B cell (primary cell): ENCODE measurements at regions of chr1 and their contacts with region 1.

Region 1: DNA sequence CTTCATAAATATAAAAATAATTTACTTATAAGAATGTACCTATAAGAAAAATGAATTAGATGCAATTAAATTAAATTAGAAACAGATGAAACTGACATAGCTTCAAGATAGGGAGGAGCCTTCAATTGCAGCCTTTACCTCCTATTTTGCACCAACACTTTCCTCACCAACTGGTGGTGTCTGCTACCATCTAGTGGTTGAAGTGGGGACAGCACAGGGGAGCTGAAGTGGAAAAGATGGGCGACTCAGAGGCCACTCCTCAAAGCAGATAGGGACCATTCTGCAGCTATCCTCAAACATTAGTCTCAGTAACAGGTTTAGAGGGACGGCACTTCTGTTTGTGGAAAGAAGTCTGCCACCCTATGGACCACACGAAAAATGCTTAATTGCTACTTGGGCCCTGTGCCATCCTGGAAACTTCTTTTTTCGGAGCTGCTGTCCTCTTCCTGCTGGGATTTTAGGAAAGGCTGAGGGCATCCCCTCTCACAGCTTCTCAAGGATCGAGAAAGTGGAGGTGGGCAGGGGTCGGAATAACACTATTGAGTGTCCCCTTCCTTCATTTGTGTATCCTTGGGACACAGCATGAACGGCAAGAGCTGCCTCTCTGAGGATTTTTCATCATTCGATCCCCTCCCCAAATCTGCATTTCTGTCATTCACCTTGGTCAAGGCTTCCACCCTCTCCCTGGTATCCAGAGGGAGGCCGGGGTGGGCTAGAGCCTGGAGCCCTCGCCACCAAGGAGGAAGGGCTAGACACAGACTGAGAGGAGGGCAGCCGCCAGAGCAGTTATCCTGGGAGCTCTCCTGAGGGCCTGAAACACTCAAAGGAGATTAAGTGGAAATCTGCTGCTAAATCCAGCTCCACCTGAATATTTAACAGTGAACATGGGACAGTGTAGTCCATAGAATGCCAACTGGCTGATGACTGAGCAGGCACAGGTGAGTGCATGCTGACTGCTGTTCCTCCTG is 9.6 kb downstream of the PROK1 start:
- DNase-seq: peak; percentile 87
- ATAC-seq: peak; percentile 99
- H3K4me3 ChIP-seq: no peak overlapping the region
- H3K4me3 Mint-ChIP-seq: no peak overlapping the region
- H3K27ac ChIP-seq: no peak overlapping the region
- H3K27ac Mint-ChIP-seq: no peak overlapping the region
- H3K4me1 ChIP-seq: peaks cover 0 to 2% of the 10 kb centered on the region in 2 donors
- H3K4me1 Mint-ChIP-seq: no peaks in the 10 kb centered on the region
- H3K27me3 ChIP-seq: peaks cover 0 to 3% (median 0%) of the 10 kb centered on the region in 4 experiments
- H3K27me3 Mint-ChIP-seq: peaks cover 4% of the 10 kb centered on the region
- CTCF ChIP-seq: peak; percentile 97

Region 2: GRCh38 chr1:110087812-110088738 is 372.5 kb before region 1 on chr1:
- CTCF ChIA-PET with region 1: interaction called, 13 read pairs
- POLR2A ChIA-PET with region 1: no interaction called
- intact Hi-C with region 1: no loop called
- DNase-seq: peak; percentile 72
- ATAC-seq: peak; percentile 59
- H3K4me3 ChIP-seq: no peak overlapping the region
- H3K4me3 Mint-ChIP-seq: no peak overlapping the region
- H3K27ac ChIP-seq: no peak overlapping the region
- H3K27ac Mint-ChIP-seq: no peak overlapping the region
- H3K4me1 ChIP-seq: peaks cover 10 to 18% of the 10 kb centered on the region in 2 donors
- H3K4me1 Mint-ChIP-seq: peaks cover 11% of the 10 kb centered on the region
- H3K27me3 ChIP-seq: peaks cover 0 to 47% (median 19%) of the 10 kb centered on the region in 4 experiments
- H3K27me3 Mint-ChIP-seq: peaks cover 48% of the 10 kb centered on the region
- CTCF ChIP-seq: peak; percentile 79

Region 3: DNA sequence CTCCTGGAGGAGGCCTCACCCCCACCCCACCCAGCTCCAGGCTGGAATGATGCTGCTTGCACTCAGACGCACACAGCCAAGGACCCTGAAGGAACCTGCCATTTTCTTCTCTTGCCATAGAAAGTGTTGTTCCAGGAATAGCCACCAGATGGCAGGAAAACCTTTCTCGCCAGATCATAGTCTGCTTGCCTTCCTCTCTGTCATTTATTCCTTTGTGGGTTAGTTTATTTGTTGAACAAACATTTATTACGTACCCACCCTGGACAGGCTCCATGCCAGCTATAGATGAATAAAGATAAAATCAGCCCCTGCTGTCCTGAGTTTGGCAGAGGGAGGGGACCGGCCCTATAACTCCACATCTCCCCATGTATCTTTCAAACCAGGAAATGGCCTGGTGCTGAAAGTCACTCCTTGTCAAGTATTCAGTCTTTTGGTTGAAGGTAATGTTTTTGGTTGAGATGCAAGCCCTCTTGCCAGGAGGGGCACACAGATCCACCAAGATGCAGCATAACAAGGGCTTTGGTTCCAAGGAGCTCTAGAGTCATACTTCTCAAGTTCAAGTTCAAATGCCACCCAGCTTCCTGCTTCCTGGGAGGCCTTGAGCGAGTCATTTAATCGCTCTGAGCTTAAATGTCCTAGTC is 257.4 kb before region 1 on chr1:
- CTCF ChIA-PET with region 1: interaction called, 837 read pairs
- POLR2A ChIA-PET with region 1: interaction called, 7 read pairs
- intact Hi-C with region 1: loop called (anchors 1 kb)
- DNase-seq: peak; percentile 84
- ATAC-seq: peak; percentile 71
- H3K4me3 ChIP-seq: no peak overlapping the region
- H3K4me3 Mint-ChIP-seq: no peak overlapping the region
- H3K27ac ChIP-seq: no peak overlapping the region
- H3K27ac Mint-ChIP-seq: no peak overlapping the region
- H3K4me1 ChIP-seq: peaks cover 3 to 7% of the 10 kb centered on the region in 2 donors
- H3K4me1 Mint-ChIP-seq: peaks cover 11% of the 10 kb centered on the region
- H3K27me3 ChIP-seq: no peaks in the 10 kb centered on the region
- H3K27me3 Mint-ChIP-seq: no peaks in the 10 kb centered on the region
- CTCF ChIP-seq: peak; percentile 91

Region 4: DNA sequence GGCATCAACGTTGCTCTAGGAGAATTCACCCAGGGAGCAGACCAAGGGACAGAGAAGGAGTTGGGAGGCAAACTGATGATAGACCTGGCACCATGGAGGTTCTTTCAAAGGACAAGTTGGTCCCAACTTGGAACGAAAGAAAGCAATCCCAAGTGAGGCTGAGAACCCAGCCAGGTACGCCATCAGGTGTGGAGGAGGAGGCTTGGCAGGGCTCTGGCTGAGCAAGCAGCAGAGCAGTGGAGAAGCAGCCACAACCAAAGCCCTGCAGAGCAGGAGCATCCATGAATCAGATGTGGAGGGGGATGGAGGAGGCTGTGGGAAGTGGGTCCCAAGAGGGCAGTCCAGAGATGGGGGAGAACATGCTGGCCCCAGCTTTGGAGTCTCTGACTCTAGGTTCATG is 157.7 kb before region 1 on chr1:
- CTCF ChIA-PET with region 1: interaction called, 10 read pairs
- POLR2A ChIA-PET with region 1: no interaction called
- intact Hi-C with region 1: no loop called
- DNase-seq: no peak
- ATAC-seq: no peak
- H3K4me3 ChIP-seq: no peak overlapping the region
- H3K4me3 Mint-ChIP-seq: no peak overlapping the region
- H3K27ac ChIP-seq: no peak overlapping the region
- H3K27ac Mint-ChIP-seq: no peak overlapping the region
- H3K4me1 ChIP-seq: no peaks in the 10 kb centered on the region
- H3K4me1 Mint-ChIP-seq: no peaks in the 10 kb centered on the region
- H3K27me3 ChIP-seq: no peaks in the 10 kb centered on the region
- H3K27me3 Mint-ChIP-seq: no peaks in the 10 kb centered on the region
- CTCF ChIP-seq: no peak

Region 5: DNA sequence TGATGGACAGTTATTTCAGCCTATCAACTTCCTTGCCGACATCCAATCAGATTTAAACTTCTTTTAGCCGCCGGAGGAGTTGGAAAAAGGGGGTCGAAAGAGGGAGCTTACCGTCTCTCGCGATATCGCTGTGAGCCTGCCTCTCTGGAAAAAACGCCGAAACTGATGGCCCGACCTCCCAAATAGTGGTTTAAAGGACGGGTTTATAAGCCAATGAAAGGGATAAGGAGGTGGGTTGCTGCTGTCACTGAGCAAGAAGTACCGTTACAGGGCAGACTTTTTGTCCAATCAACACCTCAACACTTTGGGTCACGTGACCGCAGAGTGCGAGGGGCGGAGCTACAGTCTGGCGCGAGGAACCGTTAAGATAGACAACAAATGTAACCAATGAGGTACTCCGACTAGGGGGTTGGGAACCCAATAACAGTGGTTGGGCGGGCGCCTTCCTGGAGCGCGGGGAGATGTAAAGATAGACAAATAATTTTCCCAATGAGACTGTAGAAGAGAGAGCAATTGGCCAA is 121.6 kb before region 1 on chr1 and contains the start of gene RBM15:
- CTCF ChIA-PET with region 1: interaction called, 92 read pairs
- POLR2A ChIA-PET with region 1: interaction called, 4 read pairs
- intact Hi-C with region 1: loop called (anchors 1 kb)
- DNase-seq: peak; percentile 100
- ATAC-seq: peak; percentile 73
- H3K4me3 ChIP-seq: peak within 1 kb of the TSS; percentile 61 to 100 (median 98)
- H3K4me3 Mint-ChIP-seq: no peak within 1 kb of the TSS
- H3K27ac ChIP-seq: peak within 1 kb of the TSS; percentile 95 to 97
- H3K27ac Mint-ChIP-seq: no peak within 1 kb of the TSS
- H3K4me1 ChIP-seq: peaks cover 43 to 44% of the 10 kb centered on the region in 2 donors
- H3K4me1 Mint-ChIP-seq: peaks cover 51% of the 10 kb centered on the region
- H3K27me3 ChIP-seq: no peaks in the 10 kb centered on the region
- H3K27me3 Mint-ChIP-seq: no peaks in the 10 kb centered on the region
- CTCF ChIP-seq: no peak
- total RNA-seq, gene RBM15: 97.7 and 102 TPM in 2 replicates

Region 6: GRCh38 chr1:110412576-110412975 is 48.0 kb before region 1 on chr1:
- CTCF ChIA-PET with region 1: interaction called, 126 read pairs
- POLR2A ChIA-PET with region 1: interaction called, 4 read pairs
- intact Hi-C with region 1: loop called (anchors 1 kb)
- DNase-seq: peak; percentile 80
- ATAC-seq: peak; percentile 52
- H3K4me3 ChIP-seq: no peak overlapping the region
- H3K4me3 Mint-ChIP-seq: peak overlapping the region; percentile 77
- H3K27ac ChIP-seq: no peak overlapping the region
- H3K27ac Mint-ChIP-seq: peak overlapping the region; percentile 78
- H3K4me1 ChIP-seq: peaks cover 8 to 18% of the 10 kb centered on the region in 2 donors
- H3K4me1 Mint-ChIP-seq: peaks cover 29% of the 10 kb centered on the region
- H3K27me3 ChIP-seq: no peaks in the 10 kb centered on the region
- H3K27me3 Mint-ChIP-seq: no peaks in the 10 kb centered on the region
- CTCF ChIP-seq: peak; percentile 90

Region 7: DNA sequence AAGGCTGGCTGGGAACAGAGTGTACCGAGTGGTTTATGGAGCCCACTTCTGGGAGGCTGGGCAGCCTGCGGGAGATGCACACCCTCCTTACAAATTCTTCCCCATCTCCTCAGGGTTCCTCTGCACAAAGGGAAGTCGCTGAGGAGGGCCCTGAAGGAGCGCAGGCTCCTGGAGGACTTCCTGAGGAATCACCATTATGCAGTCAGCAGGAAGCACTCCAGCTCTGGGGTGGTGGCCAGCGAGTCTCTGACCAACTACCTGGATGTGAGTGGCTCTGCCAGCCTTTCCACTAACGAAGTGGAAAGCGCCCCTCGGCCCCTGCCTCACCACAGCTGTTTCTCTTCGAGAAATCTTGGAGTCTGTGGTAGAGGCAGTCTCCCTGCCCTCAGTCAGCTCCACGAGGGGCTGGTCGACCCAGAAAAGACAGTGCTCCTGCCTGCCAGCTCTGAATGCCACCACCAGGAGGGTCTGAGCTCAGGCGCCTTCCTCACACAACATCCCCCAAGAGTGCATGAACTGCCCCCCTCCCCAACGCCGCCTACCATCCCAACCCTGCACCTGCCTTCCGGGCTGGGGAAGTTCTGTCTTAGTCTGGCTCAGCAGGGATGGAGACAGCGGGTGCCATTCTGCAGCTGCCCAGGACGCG is 22.2 kb after region 1 on chr1:
- CTCF ChIA-PET with region 1: interaction called, 11 read pairs
- POLR2A ChIA-PET with region 1: no interaction called
- intact Hi-C with region 1: no loop called
- DNase-seq: no peak
- ATAC-seq: no peak
- H3K4me3 ChIP-seq: no peak overlapping the region
- H3K4me3 Mint-ChIP-seq: no peak overlapping the region
- H3K27ac ChIP-seq: no peak overlapping the region
- H3K27ac Mint-ChIP-seq: no peak overlapping the region
- H3K4me1 ChIP-seq: no peaks in the 10 kb centered on the region
- H3K4me1 Mint-ChIP-seq: no peaks in the 10 kb centered on the region
- H3K27me3 ChIP-seq: peaks cover 0 to 13% (median 4%) of the 10 kb centered on the region in 4 experiments
- H3K27me3 Mint-ChIP-seq: peaks cover 38% of the 10 kb centered on the region
- CTCF ChIP-seq: no peak

Region 8: GRCh38 chr1:110736900-110737605 is 276.5 kb after region 1 on chr1:
- CTCF ChIA-PET with region 1: no interaction called
- POLR2A ChIA-PET with region 1: no interaction called
- intact Hi-C with region 1: no loop called
- DNase-seq: no peak
- ATAC-seq: no peak
- H3K4me3 ChIP-seq: no peak overlapping the region
- H3K4me3 Mint-ChIP-seq: no peak overlapping the region
- H3K27ac ChIP-seq: no peak overlapping the region
- H3K27ac Mint-ChIP-seq: no peak overlapping the region
- H3K4me1 ChIP-seq: no peaks in the 10 kb centered on the region
- H3K4me1 Mint-ChIP-seq: no peaks in the 10 kb centered on the region
- H3K27me3 ChIP-seq: peaks cover 0 to 16% (median 1%) of the 10 kb centered on the region in 4 experiments
- H3K27me3 Mint-ChIP-seq: peaks cover 48% of the 10 kb centered on the region
- CTCF ChIP-seq: no peak